AG04449 (cell line): ENCODE measurements at regions of chr17 and their contacts with region 1.

Region 1: DNA sequence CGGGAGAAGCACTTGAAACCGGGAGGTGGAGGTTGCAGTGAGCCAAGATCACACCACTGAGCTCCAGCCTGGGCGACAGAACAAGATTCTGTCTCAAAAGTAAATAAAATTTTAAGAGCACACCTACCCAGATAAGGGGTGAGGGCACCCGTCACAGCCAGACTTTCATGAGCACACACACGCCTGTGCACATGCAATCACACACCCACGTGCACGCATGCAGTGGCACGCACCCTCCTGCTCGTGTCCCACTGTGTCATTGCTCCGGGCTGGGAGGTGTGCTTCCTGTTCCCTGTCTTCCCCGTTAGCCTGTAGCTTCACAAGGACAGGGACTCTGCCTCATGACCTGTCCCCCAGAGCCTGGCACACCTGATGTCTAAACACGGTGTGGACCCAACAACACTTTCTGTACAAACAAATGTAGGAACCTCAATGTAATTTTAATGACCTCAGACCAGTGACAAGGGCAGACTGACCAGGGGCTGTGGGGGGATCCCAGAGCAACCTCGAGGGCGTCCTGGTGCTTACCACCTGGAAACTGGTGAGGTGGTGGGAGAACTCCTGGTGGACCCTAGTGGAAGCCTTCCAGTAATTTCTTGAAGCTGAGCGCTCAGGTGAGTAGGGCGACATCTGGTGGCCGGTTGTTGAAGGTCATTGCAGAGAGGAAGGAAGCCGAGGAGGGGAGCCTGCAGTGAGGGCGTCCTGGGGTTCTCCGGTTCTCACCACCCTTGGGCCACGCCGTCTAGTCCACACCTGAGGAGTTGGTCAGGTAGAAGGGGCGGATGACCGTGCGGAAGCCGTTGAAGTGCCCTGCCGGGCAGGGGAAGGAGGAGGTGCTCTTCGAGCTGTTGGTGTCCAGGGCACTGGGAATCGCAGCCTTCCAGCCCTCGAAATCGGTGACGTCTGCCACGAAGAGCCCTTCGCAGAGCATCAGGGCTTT is 8.6 kb downstream of the LGALS3BP start:
- DNase-seq: no peak
- H3K4me3 ChIP-seq: no peak overlapping the region; the same call in 1 of the 2 replicates
- CTCF ChIP-seq: peak; percentile 83

Region 2: DNA sequence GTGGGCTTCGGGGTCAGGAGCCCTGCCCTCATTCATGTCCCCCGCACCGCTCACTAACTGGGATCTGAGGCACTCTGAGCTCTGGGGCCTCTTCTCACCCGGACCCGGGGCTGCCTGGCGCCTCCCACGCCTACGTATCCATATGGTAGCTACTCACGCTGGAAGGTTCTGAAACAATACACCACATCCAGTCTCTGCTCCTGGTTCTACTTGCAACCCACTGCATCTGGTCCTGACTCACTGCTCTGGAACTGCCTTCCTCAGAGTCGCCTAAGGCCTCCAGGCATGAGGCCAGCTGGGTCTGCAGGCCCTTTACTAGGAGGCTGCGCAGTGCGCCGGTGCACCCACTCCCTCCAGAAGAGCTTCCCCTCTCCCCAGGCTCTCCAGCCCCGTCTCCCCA is 148.6 kb before region 1 on chr17:
- CTCF ChIA-PET with region 1: interaction called, 13 read pairs
- POLR2A ChIA-PET with region 1: no interaction called
- DNase-seq: peak; percentile 94
- H3K4me3 ChIP-seq: peak overlapping the region; percentile 25
- CTCF ChIP-seq: no peak

Region 3: GRCh38 chr17:78883164-78884122 is 87.7 kb before region 1 on chr17:
- CTCF ChIA-PET with region 1: interaction called, 15 read pairs
- POLR2A ChIA-PET with region 1: interaction called, 4 read pairs
- DNase-seq: peak; percentile 75
- H3K4me3 ChIP-seq: peak overlapping the region; percentile 44
- CTCF ChIP-seq: no peak

Region 4: GRCh38 chr17:78903101-78903779 is 67.9 kb before region 1 on chr17 and contains the start of gene CEP295NL:
- CTCF ChIA-PET with region 1: interaction called, 10 read pairs
- POLR2A ChIA-PET with region 1: no interaction called
- DNase-seq: no peak
- H3K4me3 ChIP-seq: no peak within 1 kb of the TSS
- CTCF ChIP-seq: no peak

Region 5: DNA sequence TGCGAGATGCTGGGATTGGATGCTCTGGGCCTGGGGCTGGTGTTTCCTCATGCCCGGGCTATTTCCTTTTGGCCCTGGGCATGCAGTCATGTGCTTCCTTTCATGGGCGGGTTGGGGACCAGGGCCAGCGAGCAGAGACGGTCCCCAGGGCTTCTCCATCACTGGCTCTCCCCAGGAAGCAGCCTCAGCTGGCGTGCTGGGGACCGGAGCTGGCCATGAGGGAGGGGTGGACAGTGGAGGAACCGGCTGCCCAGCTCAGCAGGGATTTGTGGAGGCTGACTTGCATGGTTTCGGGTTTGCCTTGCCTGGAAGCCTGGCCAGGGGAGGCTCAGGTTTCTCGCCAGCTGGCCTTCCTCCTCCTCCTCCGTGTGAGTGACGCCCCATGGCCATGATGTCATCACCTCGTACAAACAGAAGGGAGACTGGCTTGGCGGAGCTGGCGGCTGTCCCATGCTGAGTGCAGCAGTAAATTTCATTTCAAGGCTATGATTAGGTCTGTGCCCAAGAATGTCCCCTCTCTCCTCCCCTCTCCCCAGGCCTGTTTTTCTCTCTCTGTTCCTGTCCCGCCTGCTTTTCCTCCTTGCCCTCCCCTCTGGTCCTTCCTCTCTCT is 37.0 kb before region 1 on chr17:
- CTCF ChIA-PET with region 1: interaction called, 14 read pairs
- POLR2A ChIA-PET with region 1: interaction called, 3 read pairs
- DNase-seq: peak; percentile 95
- H3K4me3 ChIP-seq: peak overlapping the region; percentile 45
- CTCF ChIP-seq: no peak

Region 6: GRCh38 chr17:78947235-78948127 is 23.6 kb before region 1 on chr17:
- CTCF ChIA-PET with region 1: interaction called, 41 read pairs
- POLR2A ChIA-PET with region 1: no interaction called
- DNase-seq: no peak
- H3K4me3 ChIP-seq: no peak overlapping the region
- CTCF ChIP-seq: no peak

Region 7: DNA sequence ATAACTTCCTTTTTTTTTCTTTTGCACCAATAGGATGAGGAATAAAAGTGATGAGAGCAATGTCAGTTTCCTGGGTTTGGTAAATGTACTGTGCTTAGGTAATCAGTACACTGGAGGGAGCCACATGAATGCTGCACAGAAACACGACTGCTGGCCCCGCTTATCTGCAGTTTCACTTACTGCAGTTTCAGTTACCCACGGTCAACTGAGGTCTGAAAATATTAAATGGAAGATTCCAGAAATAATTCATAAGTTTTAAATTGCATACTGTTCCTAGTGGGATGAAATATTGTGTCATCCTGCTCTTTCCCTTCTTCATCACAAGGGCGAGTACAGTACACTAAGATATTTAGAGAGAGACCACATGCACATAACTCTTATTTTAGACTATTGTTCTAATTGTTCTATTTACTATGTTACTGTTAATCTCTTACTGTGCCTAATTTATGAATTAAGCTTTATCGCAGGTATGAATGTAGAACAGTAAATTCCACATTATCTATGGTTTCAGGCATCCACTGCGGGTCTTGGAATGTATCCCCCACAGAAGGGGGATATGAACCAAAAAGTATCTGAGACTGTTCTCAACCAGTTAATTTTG is 15.0 kb after region 1 on chr17:
- CTCF ChIA-PET with region 1: interaction called, 35 read pairs
- POLR2A ChIA-PET with region 1: no interaction called
- DNase-seq: no peak
- H3K4me3 ChIP-seq: no peak overlapping the region; the same call in 1 of the 2 replicates
- CTCF ChIP-seq: no peak